ENCODE measurements at regions of chr1 and their contacts with region 1.

Region 1: DNA sequence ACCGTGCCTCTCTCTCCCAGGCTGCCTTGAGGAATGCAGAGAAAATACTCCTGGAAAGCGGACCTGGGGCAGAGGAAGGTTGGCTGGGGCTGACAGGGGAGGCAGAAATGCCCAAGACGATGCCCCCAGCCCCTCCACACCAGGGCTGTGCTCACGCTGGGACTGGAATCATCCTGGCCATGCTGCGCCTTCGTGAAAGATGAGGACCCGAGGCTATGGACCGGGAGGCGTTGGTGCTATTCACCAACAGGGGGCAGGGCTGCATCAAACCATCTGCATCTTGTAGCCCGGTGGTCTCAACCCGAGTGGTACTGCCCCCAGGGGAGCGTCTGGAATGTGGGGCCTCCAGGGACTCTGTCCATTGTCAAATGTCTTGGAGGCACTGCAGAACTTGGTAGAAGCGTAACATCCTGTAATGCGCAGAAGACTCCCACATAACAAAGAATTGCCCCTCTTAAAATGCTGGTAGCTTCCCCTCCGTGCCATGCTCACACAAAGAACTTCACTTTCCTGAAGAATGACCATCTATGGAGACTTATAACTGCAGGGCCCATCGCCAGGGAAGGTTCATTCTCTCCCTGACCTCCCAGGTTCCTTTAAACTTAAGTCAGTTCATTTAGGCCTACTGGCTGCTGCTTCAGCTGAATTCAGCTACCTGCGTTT is 251.2 kb downstream of the RRAGC start:
- DNase-seq: no peak
- H3K4me3 ChIP-seq: no peak overlapping the region
- H3K27ac ChIP-seq: no peak overlapping the region
- H3K4me1 ChIP-seq: no peaks in the 10 kb centered on the region
- H3K27me3 ChIP-seq: peaks cover 0 to 28% (median 0%) of the 10 kb centered on the region in 7 donors
- CTCF ChIP-seq: peak in 8 of 11 experiments; percentile 25 to 65 (median 43)
- POLR2A ChIP-seq: no peak

Region 2: GRCh38 chr1:38274974-38275373 is 333.4 kb before region 1 on chr1:
- intact Hi-C with region 1: no loop called
- DNase-seq: peak; percentile 56
- H3K4me3 ChIP-seq: no peak overlapping the region
- H3K27ac ChIP-seq: no peak overlapping the region
- H3K4me1 ChIP-seq: peaks cover 0 to 8% (median 0%) of the 10 kb centered on the region in 6 donors
- H3K27me3 ChIP-seq: peaks cover 0 to 60% (median 8%) of the 10 kb centered on the region in 7 donors
- CTCF ChIP-seq: no peak
- POLR2A ChIP-seq: no peak

Region 3: DNA sequence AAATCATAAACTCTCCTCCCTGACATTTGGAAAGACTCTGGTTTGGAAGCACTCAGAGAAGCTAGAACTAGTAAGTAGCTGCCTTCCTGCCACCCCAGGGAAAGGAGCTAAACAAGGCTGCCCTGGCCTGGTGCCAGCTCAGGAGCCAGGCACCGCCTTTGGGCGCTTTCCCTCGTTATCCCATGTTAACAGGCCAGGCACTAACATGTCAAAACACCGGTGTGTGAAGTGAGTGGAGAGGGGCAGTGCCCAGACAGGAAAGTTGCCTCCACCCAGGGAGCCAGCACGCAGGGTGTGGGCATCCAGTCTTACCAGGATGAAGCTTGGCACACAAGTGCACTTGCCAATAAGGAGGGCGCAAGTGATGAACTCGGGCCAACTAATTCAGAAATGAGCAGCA is 95.5 kb before region 1 on chr1:
- intact Hi-C with region 1: no loop called
- DNase-seq: no peak
- H3K4me3 ChIP-seq: no peak overlapping the region
- H3K27ac ChIP-seq: no peak overlapping the region
- H3K4me1 ChIP-seq: peaks cover 0 to 13% (median 8%) of the 10 kb centered on the region in 6 donors
- H3K27me3 ChIP-seq: peaks cover 0 to 42% (median 0%) of the 10 kb centered on the region in 7 donors
- CTCF ChIP-seq: no peak
- POLR2A ChIP-seq: no peak

Region 4: GRCh38 chr1:38818175-38818976 is 210.0 kb after region 1 on chr1:
- intact Hi-C with region 1: loop called (anchors 10 kb)
- DNase-seq: peak; percentile 88
- H3K4me3 ChIP-seq: peak overlapping the region; percentile 16 to 63 (median 29)
- H3K27ac ChIP-seq: peak overlapping the region in 1 of 8 donors; percentile 21
- H3K4me1 ChIP-seq: peaks cover 13 to 40% (median 26%) of the 10 kb centered on the region in 6 donors
- H3K27me3 ChIP-seq: peaks cover 4 to 98% (median 47%) of the 10 kb centered on the region in 7 donors
- CTCF ChIP-seq: peak in 10 of 11 experiments; percentile 8 to 93 (median 82)
- POLR2A ChIP-seq: no peak